ENCODE measurements at regions of chr19 and their contacts with region 1.

Region 1: DNA sequence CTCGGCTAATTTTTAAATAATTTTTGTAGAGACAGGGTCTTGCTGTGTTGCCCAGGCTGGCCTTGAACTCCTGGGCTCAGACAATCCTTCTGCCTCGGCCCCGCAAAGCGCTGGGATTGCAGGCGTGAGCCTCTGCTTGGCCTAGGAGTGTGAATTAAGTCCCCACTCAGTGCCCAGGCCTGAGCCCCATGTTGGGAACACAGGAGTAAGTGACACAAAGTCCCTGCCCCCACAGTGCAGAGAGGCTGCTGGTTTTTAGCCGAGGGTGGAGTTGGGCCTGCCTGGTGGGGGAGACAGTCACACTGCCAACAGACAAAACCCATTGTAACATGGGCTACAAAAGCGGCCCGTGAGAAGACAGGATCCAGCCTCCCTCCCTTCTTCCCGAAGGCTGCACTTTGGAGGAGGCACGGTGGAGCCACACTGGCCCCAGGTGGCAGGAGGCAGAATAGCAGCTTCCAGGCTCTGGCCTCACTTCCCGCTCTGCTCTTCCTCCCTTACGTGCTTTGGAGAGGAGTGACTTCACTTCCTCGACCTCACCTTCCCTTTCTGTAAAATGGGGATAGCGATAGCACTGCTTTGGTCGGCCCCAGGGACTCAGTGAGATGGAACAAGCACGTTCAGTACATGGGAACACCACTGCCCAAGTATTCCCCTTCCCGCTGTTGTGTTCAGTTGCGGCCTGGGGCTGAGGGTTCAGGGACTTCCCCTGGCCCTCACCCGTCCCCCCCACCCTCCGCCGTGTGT is 15.2 kb upstream of the EHD2 start:
- DNase-seq: peak; percentile 70 to 84
- H3K4me3 ChIP-seq: no peak overlapping the region
- H3K27ac ChIP-seq: peak overlapping the region; percentile 6 to 54
- H3K4me1 ChIP-seq: peaks cover 0 to 4% (median 2%) of the 10 kb centered on the region in 4 donors
- H3K27me3 ChIP-seq: no peaks in the 10 kb centered on the region
- CTCF ChIP-seq: peak; percentile 98 to 99

Region 2: GRCh38 chr19:47436712-47437401 is 261.2 kb before region 1 on chr19:
- intact Hi-C with region 1: loop called (anchors 5 kb)
- DNase-seq: peak; percentile 63 to 78
- H3K4me3 ChIP-seq: no peak overlapping the region
- H3K27ac ChIP-seq: no peak overlapping the region
- H3K4me1 ChIP-seq: peaks cover 0 to 12% (median 0%) of the 10 kb centered on the region in 4 donors
- H3K27me3 ChIP-seq: peaks cover 0 to 49% of the 10 kb centered on the region in 2 donors
- CTCF ChIP-seq: peak; percentile 77 to 87

Region 3: DNA sequence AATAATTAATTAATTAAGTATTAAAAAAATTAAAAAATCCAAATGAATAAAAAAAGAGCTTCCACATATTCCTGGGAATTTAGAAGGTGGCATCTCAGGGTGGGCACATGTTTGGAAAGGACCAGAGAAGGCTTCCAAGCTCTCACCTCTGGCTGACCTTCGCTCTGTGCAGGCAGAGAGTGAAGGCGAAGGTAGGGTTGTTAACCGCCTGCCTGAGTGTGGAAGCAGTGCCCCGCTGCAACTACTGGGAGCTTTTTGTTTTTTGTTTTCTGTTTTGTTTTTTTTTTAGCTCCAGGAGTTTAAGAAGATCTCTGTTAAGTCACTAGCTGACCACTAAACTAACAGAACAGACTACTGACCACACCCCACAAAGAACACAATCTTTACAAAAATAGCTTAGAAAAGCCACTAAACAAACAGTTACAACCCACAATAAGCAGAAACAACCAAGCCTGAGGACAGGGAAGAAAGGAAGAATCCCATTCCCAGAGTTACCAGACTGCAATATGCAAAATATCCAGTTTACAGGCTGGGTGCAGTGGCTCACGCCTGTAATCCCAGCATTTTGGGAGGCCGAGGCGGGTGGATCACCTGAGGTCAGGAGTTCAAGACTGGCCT is 136.5 kb before region 1 on chr19:
- intact Hi-C with region 1: no loop called
- DNase-seq: no peak
- H3K4me3 ChIP-seq: no peak overlapping the region
- H3K27ac ChIP-seq: no peak overlapping the region
- H3K4me1 ChIP-seq: no peaks in the 10 kb centered on the region
- H3K27me3 ChIP-seq: no peaks in the 10 kb centered on the region
- CTCF ChIP-seq: no peak

Measured in tibial artery (tissue), 4 donors.